ENCODE measurements at regions of chr2 and their contacts with region 1.

Region 1: DNA sequence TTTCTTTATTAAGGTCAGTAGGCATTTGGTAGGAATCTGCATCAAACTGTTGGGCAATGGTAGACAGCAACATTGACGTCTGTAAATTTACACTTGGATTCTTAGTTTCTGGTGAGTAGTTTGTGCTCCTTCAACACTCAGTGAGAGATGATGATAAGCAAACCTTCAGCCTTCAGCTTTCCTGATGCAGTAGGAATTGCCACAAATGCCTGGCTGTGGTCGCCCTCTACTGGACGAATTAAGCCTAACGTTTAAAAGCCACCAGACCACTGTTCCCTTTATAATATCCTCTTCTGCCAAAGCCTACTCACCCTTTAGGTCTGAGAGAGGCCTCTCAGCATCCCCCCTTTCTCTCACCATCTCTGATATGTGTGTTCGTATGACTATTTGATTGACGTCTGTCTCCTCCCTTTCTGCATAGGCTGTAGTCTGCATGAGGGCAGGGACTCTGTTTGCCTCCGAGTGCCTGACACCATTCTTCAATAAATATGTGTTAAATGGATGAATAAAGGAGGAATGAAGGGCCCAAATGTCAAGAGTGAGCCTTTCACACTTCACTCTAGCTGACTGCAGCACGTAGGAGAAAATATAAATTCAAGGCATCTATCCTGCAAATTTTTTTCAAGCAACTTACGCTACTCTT is 47.0 kb upstream of the PLEKHM3 start:
- DNase-seq: peak; percentile 43
- H3K4me3 ChIP-seq: no peak overlapping the region
- H3K27ac ChIP-seq: no peak overlapping the region
- H3K4me1 ChIP-seq: no peaks in the 10 kb centered on the region
- H3K27me3 ChIP-seq: no peaks in the 10 kb centered on the region
- CTCF ChIP-seq: peak; percentile 70 to 87

Region 2: DNA sequence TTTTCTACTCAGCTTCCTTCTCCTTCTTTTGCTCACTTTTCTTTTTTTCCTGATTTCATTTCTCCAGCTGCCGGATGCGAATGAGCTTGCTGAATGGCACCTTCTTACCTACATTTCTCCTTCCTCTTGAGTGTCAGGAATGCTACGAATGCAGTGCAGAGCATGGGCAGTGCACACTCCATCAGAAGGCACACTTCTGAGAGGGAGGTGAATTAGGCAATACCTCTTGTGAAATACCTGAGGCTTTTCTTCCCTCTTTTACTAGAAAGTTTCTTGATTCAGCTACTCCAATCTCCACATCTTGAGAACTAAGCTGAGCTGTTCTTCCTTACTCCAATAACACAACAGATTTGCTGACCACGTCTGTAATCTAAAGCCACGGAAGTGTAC is 98.2 kb before region 1 on chr2:
- CTCF ChIA-PET with region 1: interaction called, 3 read pairs
- dilution Hi-C with region 1: no loop called
- in situ Hi-C with region 1: no loop called
- intact Hi-C with region 1: loop called (anchors 5 kb)
- DNase-seq: peak; percentile 16
- H3K4me3 ChIP-seq: no peak overlapping the region
- H3K27ac ChIP-seq: no peak overlapping the region
- H3K4me1 ChIP-seq: no peaks in the 10 kb centered on the region
- H3K27me3 ChIP-seq: no peaks in the 10 kb centered on the region
- CTCF ChIP-seq: no peak

Region 3: DNA sequence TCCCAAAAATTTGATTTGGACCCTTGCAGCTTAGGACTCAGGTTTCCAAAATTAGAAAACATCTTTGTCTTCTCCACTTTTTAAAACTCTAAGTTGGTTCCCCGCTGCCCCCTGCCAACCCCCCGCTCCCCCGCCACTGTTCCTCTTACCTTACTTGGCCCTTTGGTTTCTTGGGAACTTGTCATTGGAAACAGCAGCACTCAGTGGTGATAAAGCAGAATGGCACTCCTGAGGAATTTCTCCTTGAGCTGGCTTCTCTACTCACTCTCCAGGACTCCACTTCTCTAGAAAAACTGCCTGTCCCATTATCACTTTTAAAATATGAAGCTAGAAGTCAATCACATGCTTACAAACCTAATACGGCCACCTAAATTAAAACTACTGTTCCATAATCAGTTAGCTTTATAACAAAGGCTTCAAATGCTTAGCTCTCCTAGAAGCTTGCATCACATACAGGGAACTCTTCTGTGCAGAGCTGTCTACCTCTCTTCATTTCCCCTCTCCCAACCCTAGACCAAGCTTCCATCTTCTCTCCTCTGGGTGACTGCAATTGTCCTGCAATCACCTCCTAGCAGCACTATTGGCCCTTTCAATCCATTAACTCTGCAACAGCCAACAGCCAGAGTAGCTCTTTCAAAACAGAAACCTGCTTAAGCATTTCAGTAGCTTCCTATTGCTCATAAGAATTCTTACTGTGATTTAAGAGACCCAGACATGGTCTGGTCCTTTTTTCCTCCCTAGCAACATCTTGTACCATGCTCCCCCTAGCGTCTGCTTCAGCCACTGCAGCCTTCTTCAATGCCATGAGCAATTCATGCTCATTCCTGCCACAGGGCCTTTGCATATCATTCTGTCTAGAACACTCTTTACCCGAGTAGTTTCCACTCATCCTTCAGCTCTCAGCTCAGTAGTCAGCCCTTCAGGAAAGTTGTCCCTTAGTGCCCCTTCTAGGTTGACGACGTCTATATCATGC is 31.9 kb before region 1 on chr2:
- CTCF ChIA-PET with region 1: interaction called, 16 read pairs
- dilution Hi-C with region 1: no loop called
- in situ Hi-C with region 1: no loop called
- intact Hi-C with region 1: loop called (anchors 1 kb)
- DNase-seq: peak; percentile 50
- H3K4me3 ChIP-seq: no peak overlapping the region
- H3K27ac ChIP-seq: no peak overlapping the region
- H3K4me1 ChIP-seq: no peaks in the 10 kb centered on the region
- H3K27me3 ChIP-seq: no peaks in the 10 kb centered on the region
- CTCF ChIP-seq: peak; percentile 73 to 93